ENCODE measurements at regions of chr10 and their contacts with region 1.

Region 1: DNA sequence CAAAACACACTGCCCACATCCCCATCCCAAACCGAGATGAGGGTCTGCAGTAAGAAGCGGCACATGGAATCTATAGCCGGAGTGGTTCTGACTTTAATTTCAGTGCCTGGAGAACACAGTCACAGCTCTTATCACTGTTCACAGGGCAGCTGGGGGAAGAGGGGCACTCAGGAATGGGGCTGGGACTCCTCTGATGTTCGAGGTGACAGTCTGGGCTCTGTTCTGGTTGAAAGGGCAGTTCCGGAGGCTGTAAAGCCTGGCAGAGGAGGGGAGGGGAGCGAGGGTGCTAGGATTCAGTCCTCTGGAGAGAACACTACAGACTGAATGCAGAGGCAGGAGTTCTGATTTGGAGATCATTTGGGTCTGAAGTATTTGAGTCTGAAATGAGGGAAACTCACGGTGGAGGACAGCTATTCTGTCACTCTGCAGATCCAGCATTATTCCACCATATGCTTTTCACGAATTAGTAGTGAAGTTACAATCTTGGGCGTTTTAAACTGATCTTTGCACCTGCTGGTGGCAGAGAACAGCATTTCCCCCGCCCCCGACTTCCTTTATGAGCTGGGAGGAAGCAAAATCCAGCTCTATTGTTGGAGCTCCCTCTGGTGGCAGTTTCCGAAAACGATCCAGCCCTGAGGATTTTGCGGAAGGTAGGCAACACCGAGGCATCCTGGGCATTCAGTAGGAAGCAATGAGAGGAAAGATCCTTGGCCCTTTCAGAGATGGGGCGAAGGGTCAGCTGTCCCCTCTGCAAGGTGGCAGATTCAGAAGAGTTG is 22.7 kb upstream of the KCNK18 start:
- DNase-seq: peak; percentile 84
- H3K4me3 ChIP-seq: peak overlapping the region; percentile 52 to 64
- H3K27ac ChIP-seq: no peak overlapping the region
- H3K4me1 ChIP-seq: peaks cover 0 to 9% of the 10 kb centered on the region in 2 experiments; a peak in 1 of 4 replicates
- H3K27me3 ChIP-seq: peaks cover 37% of the 10 kb centered on the region
- CTCF ChIP-seq: peak; percentile 89
- EP300 ChIP-seq: no peak
- RAD21 ChIP-seq: peak; percentile 85

Region 2: GRCh38 chr10:116796910-116797513 is 377.6 kb before region 1 on chr10:
- CTCF ChIA-PET with region 1: interaction called, 265 read pairs
- POLR2A ChIA-PET with region 1: interaction called, 4 read pairs
- DNase-seq: peak; percentile 87
- H3K4me3 ChIP-seq: no peak overlapping the region
- H3K27ac ChIP-seq: no peak overlapping the region
- H3K4me1 ChIP-seq: no peaks in the 10 kb centered on the region
- H3K27me3 ChIP-seq: no peaks in the 10 kb centered on the region
- CTCF ChIP-seq: peak; percentile 97
- EP300 ChIP-seq: no peak
- RAD21 ChIP-seq: peak; percentile 97

Region 3: GRCh38 chr10:116826803-116827202 is 347.8 kb before region 1 on chr10:
- CTCF ChIA-PET with region 1: interaction called, 17 read pairs
- POLR2A ChIA-PET with region 1: no interaction called
- DNase-seq: no peak
- H3K4me3 ChIP-seq: no peak overlapping the region
- H3K27ac ChIP-seq: no peak overlapping the region
- H3K4me1 ChIP-seq: peaks cover 0 to 6% of the 10 kb centered on the region in 2 experiments; a peak in 1 of 4 replicates
- H3K27me3 ChIP-seq: no peaks in the 10 kb centered on the region; the same call in 1 of the 2 replicates
- CTCF ChIP-seq: no peak
- EP300 ChIP-seq: no peak
- RAD21 ChIP-seq: no peak

Region 4: GRCh38 chr10:117131376-117132327 is 43.0 kb before region 1 on chr10:
- CTCF ChIA-PET with region 1: interaction called, 27 read pairs
- POLR2A ChIA-PET with region 1: no interaction called
- DNase-seq: peak; percentile 41
- H3K4me3 ChIP-seq: no peak overlapping the region
- H3K27ac ChIP-seq: no peak overlapping the region
- H3K4me1 ChIP-seq: no peaks in the 10 kb centered on the region; a peak in 2 of 4 replicates
- H3K27me3 ChIP-seq: peaks cover 82% of the 10 kb centered on the region
- CTCF ChIP-seq: no peak
- EP300 ChIP-seq: no peak
- RAD21 ChIP-seq: no peak

Region 5: DNA sequence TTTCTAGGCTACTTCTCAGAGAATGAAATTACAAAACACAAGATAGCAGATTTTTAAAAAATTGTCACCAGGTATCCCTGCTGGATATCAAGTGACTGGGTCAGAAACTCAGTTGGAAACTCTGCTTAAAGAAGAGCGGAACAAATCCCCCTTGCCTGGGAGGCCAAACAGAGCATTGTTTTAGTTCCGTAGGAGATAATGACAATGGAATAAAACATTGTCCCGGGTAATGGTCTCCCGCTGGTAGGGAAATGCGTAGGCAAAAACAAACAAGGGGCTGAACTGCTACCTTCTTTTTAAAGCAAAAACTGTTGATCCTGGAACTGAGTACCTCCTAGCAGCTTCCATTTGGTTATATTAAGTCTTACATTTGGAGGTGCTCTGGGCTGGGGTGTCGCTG is 15.2 kb before region 1 on chr10:
- CTCF ChIA-PET with region 1: interaction called, 72 read pairs
- POLR2A ChIA-PET with region 1: no interaction called
- DNase-seq: no peak
- H3K4me3 ChIP-seq: no peak overlapping the region
- H3K27ac ChIP-seq: no peak overlapping the region
- H3K4me1 ChIP-seq: no peaks in the 10 kb centered on the region; a peak in 1 of 4 replicates
- H3K27me3 ChIP-seq: peaks cover 63% of the 10 kb centered on the region
- CTCF ChIP-seq: no peak
- EP300 ChIP-seq: no peak
- RAD21 ChIP-seq: no peak

Region 6: GRCh38 chr10:117198088-117198487 is 23.5 kb after region 1 on chr10:
- CTCF ChIA-PET with region 1: interaction called, 20 read pairs
- POLR2A ChIA-PET with region 1: no interaction called
- DNase-seq: no peak
- H3K4me3 ChIP-seq: no peak overlapping the region
- H3K27ac ChIP-seq: no peak overlapping the region
- H3K4me1 ChIP-seq: no peaks in the 10 kb centered on the region
- H3K27me3 ChIP-seq: no peaks in the 10 kb centered on the region
- CTCF ChIP-seq: no peak
- EP300 ChIP-seq: no peak
- RAD21 ChIP-seq: no peak

Measured in SK-N-SH (cell line).